Left lung (tissue), 14 donors: ENCODE measurements at regions of chr7 and their contacts with region 1.

Region 1: GRCh38 chr7:1004018-1004852 is 21.3 kb downstream of the CYP2W1 start:
- DNase-seq: no peak
- ATAC-seq: no peak
- H3K4me3 ChIP-seq: no peak overlapping the region
- H3K27ac ChIP-seq: no peak overlapping the region
- H3K4me1 ChIP-seq: no peaks in the 10 kb centered on the region
- H3K27me3 ChIP-seq: no peaks in the 10 kb centered on the region
- CTCF ChIP-seq: no peak

Region 2: DNA sequence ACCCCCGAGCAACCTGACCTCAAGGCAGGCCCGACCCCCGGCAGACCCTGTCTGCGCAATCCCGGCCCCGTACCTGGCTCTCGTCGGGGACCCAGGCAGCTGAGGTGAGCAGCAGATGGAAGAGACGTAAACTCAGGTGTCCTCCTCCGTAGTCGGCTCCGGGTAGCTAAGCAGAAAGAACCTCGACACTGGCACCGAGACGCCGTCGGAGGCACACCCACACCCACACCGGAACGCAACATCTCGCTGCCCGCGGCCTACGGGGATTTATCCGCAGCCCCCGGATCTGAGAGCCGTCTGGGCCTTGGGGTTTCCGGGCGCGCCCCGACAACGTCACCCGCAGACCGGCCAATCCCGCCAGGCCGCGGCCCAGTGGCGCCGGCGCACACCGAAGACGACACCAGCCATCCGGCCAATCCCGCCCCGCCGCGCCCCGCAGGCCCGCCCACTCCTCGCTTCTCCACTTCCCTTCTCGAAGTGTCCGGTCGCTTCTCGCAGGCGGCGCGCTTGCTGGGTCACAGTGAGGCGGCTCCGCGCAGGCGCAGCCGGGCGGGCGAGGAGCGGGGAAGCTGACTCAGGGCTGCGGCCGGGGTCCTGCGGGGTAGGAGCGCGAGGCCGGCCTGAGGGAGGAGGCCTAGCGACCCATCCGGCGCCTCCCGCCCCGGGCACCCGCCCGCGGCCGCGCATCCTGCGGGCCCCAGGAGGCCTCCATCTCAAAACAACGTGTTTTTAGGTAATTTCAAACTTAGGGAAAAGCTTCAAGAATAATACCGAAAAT is 155.8 kb after region 1 on chr7 and contains the start of gene ZFAND2A:
- intact Hi-C with region 1: loop called in 1 of 2 experiments (anchors 10 kb)
- DNase-seq: peak; percentile 95 to 99 (median 98)
- ATAC-seq: peak; percentile 99
- H3K4me3 ChIP-seq: peak within 1 kb of the TSS; percentile 89 to 92
- H3K27ac ChIP-seq: peak within 1 kb of the TSS; percentile 97
- H3K4me1 ChIP-seq: peaks cover 11 to 38% of the 10 kb centered on the region in 2 donors
- H3K27me3 ChIP-seq: no peaks in the 10 kb centered on the region
- CTCF ChIP-seq: no peak
- polyA plus RNA-seq, gene ZFAND2A: 20.0 to 28.1 (median 22.8) TPM

Region 3: DNA sequence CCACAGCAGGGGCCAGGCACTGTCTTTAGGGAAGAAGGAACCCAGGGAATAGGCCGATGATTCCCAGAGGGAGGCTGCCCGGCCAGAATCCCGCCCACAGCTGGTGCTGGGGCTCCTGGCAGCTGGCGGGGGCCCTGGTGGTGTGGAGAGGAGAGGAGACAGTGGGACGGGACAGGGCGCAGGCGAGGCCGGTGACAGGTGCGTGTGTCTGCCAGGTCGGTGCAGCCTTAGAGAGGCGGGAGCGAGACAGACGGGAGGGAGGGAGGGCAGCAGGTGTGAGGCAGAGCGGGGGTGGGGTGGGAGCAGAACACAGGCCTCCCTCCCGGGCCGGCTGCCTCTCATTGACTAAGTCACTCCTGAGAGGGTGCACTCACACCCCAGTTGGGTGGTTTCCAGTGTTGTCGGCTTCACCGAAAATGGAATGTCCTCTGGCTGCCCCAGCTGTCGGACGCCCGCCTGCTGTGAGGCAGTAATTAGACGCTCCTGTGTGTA is 721.0 kb after region 1 on chr7:
- intact Hi-C with region 1: no loop called
- DNase-seq: peak in 3 of 4 donors; percentile 51 to 72 (median 52)
- ATAC-seq: peak; percentile 76
- H3K4me3 ChIP-seq: no peak overlapping the region
- H3K27ac ChIP-seq: no peak overlapping the region
- H3K4me1 ChIP-seq: no peaks in the 10 kb centered on the region
- H3K27me3 ChIP-seq: peaks cover 0 to 36% of the 10 kb centered on the region in 2 donors
- CTCF ChIP-seq: no peak